Activated naive CD4-positive, alpha-beta T cell treated with anti-CD3 and anti-CD28 coated beads for 36 hours (primary cell): ENCODE measurements at regions of chr3 and their contacts with region 1.

Region 1: GRCh38 chr3:76044601-76045600 is 259.6 kb upstream of the ZNF717 start:
- DNase-seq: peak; percentile 31
- H3K4me3 Mint-ChIP-seq: no peak overlapping the region
- H3K27ac Mint-ChIP-seq: no peak overlapping the region
- H3K4me1 Mint-ChIP-seq: no peaks in the 10 kb centered on the region
- H3K27me3 Mint-ChIP-seq: no peaks in the 10 kb centered on the region

Region 2: DNA sequence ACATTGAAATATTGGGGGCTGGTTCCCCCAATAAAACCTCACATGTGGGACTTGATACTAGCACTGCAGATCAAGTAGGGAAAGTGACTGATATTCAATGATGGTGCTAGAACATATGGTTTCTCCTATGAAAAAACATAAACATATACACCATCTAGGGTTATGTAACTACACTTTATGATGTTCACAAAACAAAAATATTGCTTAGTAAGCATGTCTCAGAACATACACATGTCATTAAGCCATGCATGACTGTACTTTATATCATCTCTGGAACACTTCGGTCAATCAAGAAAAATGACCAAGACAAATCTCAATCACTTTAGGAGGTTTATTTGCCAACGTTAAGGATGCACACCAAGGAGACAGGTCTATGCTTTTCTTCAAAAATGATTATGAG is 316.9 kb before region 1 on chr3:
- CTCF ChIA-PET with region 1: no interaction called
- intact Hi-C with region 1: loop called (anchors 10 kb)
- DNase-seq: no peak
- H3K4me3 Mint-ChIP-seq: no peak overlapping the region
- H3K27ac Mint-ChIP-seq: no peak overlapping the region
- H3K4me1 Mint-ChIP-seq: no peaks in the 10 kb centered on the region
- H3K27me3 Mint-ChIP-seq: no peaks in the 10 kb centered on the region

Region 3: DNA sequence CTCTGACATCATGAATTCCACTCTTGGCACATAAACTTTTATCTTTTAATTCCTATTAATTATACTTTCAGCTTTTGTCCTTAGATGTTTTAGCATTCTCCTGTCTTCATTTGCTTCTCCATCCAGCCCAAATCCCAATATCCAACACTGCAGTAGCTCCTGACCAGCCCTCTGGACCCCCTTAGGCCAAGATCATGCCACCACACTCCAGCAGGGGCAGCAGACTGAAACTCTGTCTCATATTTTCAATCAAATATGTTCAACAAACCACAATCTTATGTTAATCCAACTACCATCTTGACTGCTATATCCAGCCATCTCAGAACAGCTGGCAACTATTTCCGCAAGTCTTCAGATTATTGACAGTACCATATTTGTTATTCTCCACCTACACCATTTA is 679.2 kb after region 1 on chr3:
- CTCF ChIA-PET with region 1: no interaction called
- intact Hi-C with region 1: no loop called
- DNase-seq: no peak
- H3K4me3 Mint-ChIP-seq: no peak overlapping the region
- H3K27ac Mint-ChIP-seq: no peak overlapping the region
- H3K4me1 Mint-ChIP-seq: no peaks in the 10 kb centered on the region
- H3K27me3 Mint-ChIP-seq: no peaks in the 10 kb centered on the region